Aorta (tissue), 5 donors: ENCODE measurements at regions of chr19 and their contacts with region 1.

Region 1: DNA sequence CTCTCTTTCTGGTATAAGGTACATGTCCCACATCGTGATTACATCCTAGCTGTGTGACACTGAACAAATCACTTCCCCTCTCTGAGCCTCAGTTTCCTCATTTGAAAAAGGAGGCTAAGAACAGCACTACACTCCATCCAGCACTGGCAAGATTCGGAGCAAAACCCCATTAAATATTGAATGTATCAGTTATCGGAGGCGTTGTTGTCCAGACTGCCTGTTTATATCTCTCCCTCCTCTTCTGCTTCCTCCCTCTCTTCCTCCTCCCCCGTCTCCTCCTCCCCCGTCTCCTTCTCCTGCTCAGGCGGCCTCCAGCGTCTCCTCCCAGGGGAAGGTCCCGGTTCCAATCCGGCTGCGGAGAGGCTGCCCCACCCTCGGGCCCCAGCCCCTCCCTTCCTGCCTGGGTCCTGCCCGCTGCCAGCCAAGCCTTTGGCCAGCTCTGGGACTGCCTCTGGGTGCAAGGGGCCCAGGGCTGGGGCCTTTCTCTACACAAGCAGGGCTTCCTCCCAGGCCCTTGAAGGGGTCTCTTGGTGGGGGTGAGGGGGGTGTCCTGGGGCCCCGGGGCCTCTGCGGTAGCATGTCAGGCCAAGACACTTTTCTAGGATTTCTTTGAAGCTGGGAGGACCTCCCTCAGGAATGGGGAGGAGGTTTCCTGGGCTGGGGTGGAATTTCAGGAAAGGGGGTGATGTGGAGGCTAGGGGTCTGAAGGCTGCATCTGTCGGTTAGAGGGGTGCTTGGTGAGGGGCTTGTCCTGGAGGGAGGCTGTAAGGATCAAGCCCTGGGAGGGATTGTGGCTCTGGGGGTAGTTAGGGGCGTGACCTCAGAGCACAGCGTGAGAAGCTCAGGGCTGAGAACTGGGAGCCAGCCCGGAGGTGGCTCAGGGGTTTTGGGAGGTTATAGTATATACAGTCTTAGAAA is 1.9 kb downstream of the RRAS start:
- DNase-seq: peak; percentile 93 to 96
- ATAC-seq: peak; percentile 4
- H3K4me3 ChIP-seq: peak overlapping the region; percentile 37 to 71
- H3K27ac ChIP-seq: peak overlapping the region; percentile 22 to 59
- H3K4me1 ChIP-seq: no peaks in the 10 kb centered on the region
- H3K27me3 ChIP-seq: no peaks in the 10 kb centered on the region

Region 2: DNA sequence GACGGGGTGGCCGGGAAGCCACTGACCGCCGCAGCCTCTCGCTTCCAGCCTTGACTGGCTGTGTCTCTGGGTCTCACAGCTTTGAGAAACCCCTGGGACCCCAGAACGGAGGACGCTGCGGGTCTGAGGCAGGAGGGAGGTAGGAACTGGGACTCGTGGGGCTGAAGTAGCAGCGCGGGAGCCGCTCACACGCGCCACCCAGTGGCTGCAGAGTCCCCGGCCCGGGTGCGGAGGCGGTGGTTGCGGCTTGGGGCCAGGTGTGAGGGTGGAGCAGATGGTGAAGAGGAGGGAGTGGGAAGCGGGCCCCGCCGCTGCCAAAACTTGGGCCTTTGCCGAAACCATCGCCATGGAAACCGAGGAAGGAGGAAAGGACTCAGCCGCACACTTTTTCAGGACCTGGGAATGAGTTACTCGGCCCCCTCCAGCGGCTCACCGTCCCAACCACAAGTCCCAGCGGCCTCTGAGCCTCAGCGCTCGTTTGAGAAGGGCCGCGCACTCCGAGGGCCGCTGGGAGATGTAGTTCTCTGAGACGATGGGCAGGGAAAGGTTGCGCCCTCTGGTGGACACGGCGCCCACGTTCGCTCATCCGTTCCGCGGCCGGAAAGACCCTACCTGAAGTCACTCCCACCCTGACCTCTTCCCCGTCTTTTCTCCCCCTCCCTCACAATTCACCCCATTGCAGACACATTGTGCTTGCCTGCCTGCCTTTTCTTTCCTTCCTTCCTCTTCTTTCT is 194.5 kb before region 1 on chr19:
- intact Hi-C with region 1: no loop called
- DNase-seq: peak; percentile 97 to 98
- ATAC-seq: peak; percentile 94
- H3K4me3 ChIP-seq: peak overlapping the region; percentile 15 to 42
- H3K27ac ChIP-seq: peak overlapping the region in 1 of 2 donors; percentile 11
- H3K4me1 ChIP-seq: no peaks in the 10 kb centered on the region
- H3K27me3 ChIP-seq: no peaks in the 10 kb centered on the region

Region 3: DNA sequence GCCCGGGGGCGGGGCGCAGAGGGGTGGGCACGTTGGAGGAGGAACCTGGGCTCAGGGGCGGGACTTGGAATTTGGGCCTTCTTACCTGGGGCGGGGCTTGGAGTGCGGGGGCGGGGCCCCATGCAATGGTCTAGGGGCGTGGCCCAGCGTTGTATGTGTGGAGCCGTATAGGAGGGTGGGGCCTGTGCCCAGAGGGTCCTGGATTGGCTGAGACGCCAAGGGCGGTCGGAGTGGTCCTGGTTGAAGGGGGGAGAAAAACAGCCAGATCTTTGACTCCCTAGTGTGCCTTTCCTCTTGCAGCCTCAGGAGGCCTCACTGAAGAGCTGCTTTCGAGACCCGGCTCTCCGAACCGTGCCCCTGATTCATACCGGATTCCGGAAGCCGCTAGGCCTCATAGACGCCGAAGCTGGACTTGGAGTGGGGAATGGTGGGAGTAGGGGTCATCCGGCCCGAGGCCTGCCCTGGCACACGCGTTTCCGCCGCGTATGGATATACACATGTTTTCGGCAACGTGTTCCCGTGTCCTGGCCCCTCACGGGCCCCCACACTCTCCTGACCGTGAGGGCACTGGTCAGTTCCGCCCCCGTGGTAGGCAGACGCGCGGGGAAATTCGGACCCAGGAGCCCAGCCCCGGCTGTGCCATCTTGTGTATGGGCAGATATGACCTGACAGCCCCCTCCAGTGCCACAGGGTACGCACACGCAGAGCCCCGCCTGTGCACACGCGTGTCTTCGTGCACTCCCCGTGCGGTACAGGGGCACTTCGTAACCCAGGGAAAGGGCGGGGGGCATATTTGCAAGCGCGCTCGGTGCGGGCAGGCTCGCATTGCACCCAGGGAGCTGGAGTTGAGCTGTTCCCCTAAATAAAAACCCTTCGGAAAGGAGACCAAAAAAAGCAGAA is 47.8 kb before region 1 on chr19:
- intact Hi-C with region 1: loop called in 1 of 2 experiments (anchors 2 kb)
- DNase-seq: peak; percentile 97 to 98
- ATAC-seq: peak; percentile 86
- H3K4me3 ChIP-seq: peak overlapping the region; percentile 46 to 93
- H3K27ac ChIP-seq: peak overlapping the region in 1 of 2 donors; percentile 24
- H3K4me1 ChIP-seq: no peaks in the 10 kb centered on the region
- H3K27me3 ChIP-seq: no peaks in the 10 kb centered on the region

Region 4: GRCh38 chr19:49595819-49596404 is 42.2 kb before region 1 on chr19:
- intact Hi-C with region 1: loop called (anchors 2 kb)
- DNase-seq: no peak
- ATAC-seq: no peak
- H3K4me3 ChIP-seq: no peak overlapping the region
- H3K27ac ChIP-seq: no peak overlapping the region
- H3K4me1 ChIP-seq: no peaks in the 10 kb centered on the region
- H3K27me3 ChIP-seq: no peaks in the 10 kb centered on the region

Region 5: DNA sequence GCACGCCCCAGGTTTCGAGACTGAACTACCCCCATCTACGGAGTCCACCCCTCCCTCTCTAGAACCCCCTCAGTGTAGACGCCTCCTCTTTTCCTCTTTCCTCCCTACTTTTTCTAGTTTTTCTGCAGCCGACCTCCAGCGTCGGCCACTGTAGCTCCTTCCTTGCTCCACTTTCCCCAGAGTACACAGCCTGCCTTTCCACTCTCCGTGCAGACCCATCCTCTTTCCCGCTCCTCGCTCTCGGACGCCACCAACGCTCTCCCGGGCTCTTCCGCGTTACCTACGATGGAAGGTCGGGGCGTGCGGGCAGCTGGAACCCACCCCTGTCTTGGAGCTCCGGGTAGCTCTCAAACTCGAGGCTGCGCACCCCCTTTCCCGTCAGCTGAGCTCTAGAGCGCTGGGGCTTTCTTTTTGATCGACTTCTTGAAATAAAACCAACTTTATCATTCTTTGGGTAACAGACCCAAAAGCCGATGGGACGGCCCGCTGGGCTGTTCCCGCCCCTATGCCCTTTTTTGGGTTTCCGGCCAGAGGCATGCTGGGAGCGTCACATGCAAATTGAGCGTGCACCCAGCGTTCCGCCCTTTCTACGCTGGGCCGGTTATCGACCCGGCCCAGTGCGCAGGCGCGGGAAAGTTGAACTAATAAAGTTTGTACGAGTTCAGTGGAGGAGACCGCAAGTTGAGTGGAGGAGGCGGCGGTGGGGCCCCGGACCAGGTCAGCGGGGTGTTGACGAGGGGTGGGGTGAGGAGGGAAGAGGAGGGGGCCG is 27.5 kb after region 1 on chr19 and contains the starts of genes BCL2L12 and IRF3:
- intact Hi-C with region 1: loop called in 1 of 2 experiments (anchors 1 kb)
- DNase-seq: peak; percentile 99 to 100
- ATAC-seq: peak; percentile 95
- H3K4me3 ChIP-seq: peak within 1 kb of the TSS; percentile 49 to 50
- H3K27ac ChIP-seq: peak within 1 kb of the TSS in 1 of 2 donors; percentile 80
- H3K4me1 ChIP-seq: no peaks in the 10 kb centered on the region
- H3K27me3 ChIP-seq: no peaks in the 10 kb centered on the region
- total RNA-seq, gene BCL2L12: 9.9 to 14.0 TPM
- total RNA-seq, gene IRF3: 53.7 to 82.7 TPM